ENCODE measurements at regions of chr5 and their contacts with region 1.

Region 1: GRCh38 chr5:173887610-173888472 is at the start of gene CPEB4:
- DNase-seq: peak; percentile 99 to 100
- ATAC-seq: peak; percentile 92 to 94
- H3K4me3 ChIP-seq: peak within 1 kb of the TSS; percentile 79 to 90 (median 88)
- H3K27ac ChIP-seq: peak within 1 kb of the TSS; percentile 94 to 99 (median 96)
- H3K4me1 ChIP-seq: peaks cover 0 to 14% of the 10 kb centered on the region in 2 donors
- H3K27me3 ChIP-seq: no peaks in the 10 kb centered on the region
- CTCF ChIP-seq: no peak
- POLR2A ChIP-seq: peak; percentile 99 to 100
- total RNA-seq, gene CPEB4: 97.8 to 109 (median 102) TPM

Region 2: DNA sequence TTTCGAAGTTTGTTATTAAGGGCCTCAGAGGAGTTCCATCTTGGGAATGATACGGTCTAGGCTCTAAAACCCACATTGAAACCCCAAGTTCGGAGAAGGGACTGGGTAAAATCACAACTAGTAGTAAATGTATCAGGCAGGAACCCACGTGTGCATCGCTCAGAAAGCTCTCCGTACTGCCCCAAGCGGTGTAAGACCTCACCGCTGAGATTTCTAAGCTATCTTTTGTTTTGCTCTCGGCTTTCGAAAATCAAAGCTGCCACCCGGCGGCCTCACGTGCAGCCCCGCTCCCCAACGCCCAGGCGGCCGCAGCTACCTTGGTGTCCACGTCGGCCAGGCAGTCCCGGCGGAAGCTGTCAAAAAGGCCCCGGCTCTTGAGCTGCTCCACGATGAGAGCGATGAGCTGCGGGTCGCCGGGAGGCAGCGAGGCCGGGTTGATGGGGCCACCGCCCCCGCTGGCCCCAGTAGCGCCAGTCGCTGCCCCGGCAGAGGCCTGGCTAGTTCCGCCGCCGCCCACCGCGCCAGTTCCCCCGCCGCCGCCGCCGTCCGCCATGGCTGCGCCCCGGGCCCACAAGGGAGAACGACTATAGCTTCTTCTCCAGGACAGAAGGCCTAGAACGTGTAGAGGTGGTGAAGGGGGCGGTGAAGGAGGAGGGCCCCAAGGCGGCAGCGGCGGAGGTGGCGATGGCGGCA is 271.8 kb before region 1 on chr5:
- in situ Hi-C with region 1: loop called in 3 of 4 experiments (anchors 5 to 10 kb)
- intact Hi-C with region 1: loop called (anchors 1 kb)
- DNase-seq: peak; percentile 35 to 61
- ATAC-seq: peak; percentile 73 to 77
- H3K4me3 ChIP-seq: peak overlapping the region; percentile 75 to 91 (median 88)
- H3K27ac ChIP-seq: peak overlapping the region; percentile 95 to 98 (median 97)
- H3K4me1 ChIP-seq: peaks cover 40 to 49% of the 10 kb centered on the region in 2 donors
- H3K27me3 ChIP-seq: no peaks in the 10 kb centered on the region
- CTCF ChIP-seq: peak; percentile 46 to 81 (median 67)
- POLR2A ChIP-seq: no peak

Region 3: DNA sequence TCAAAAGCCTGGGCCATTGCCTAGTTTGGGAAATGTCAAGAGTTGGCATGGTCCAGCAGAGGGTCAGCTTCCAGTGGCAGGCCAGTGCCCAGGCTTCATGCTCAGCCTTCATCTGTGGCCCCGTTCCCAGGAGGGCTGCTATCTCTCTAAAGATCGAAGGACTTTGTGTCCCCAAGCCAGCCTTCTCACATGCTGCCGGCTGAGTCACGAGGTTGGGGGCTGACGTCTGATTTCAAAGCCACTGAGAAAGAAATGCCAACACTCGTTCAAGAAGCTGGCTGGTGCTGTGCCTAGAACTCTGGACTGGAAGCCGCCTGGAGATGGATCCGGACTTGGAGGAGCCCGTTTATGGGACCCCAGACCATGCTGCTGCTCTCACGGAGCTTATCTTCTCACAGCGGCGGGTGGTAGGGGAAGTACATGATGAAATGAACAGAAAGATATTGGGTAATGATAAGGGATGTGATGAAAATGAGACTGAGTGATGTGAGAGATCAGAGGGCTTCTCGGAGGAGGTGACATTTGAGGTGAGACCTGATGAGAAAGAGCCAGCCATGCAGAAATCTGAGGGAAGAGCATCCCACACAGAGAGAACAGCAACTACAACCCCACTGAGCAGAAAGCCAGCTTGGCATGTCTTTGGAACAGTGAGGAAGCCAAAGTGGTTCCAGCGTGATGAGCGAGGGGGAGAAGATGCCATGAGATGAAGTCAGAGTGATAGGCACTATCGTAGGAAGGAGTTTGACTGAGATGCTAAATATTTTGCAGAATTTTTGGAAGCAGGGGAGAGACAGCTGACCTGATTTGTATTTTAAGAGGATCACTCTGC is 216.5 kb before region 1 on chr5:
- in situ Hi-C with region 1: no loop called
- intact Hi-C with region 1: loop called (anchors 5 kb)
- DNase-seq: peak; percentile 92 to 97
- ATAC-seq: peak; percentile 85 to 88
- H3K4me3 ChIP-seq: peak overlapping the region; percentile 32 to 48 (median 44)
- H3K27ac ChIP-seq: peak overlapping the region; percentile 87 to 91 (median 88)
- H3K4me1 ChIP-seq: peaks cover 35 to 44% of the 10 kb centered on the region in 2 donors
- H3K27me3 ChIP-seq: no peaks in the 10 kb centered on the region
- CTCF ChIP-seq: no peak
- POLR2A ChIP-seq: peak; percentile 66 to 67

Region 4: DNA sequence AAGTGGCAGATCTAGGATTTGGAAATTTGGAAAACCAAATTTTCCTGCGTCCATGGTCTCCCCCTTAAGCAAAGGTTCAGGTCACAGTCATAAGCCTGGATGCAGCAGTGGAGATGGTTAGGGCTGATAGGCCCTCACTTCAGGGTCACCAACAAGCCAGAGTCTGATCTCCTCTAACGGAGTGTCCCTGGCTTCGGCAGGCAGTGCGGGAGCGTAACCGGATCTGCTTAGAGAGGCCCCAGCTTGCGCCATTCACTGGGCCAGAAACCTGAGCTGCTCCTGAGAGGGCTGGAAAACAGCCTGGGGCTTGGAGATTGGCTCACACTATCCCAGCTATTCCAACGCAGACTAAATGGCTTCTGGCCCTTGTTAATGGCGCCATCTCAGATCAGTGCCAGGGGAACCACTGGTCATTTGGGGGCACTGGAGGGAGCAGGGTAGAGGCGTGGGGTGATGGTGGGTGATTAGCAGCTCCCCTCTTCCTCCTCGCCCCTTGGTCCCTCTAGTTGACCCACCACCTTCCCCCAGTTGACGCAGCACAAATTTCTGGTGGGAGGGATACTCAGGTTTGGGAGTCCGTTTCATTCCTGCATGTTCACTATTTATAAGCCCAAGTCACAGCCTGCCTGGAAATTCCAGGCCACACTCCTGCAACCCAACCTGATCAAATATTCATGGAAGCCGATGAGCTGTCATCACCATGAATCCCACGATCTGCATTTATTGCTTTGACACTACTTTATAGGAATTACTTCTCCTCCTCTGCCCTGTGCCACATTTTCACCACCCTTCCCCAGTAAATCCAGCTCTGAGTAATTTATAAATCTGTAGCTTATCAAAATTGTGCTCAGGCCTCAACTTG is 134.3 kb before region 1 on chr5:
- in situ Hi-C with region 1: loop called in 1 of 4 experiments (anchors 5 kb)
- intact Hi-C with region 1: no loop called
- DNase-seq: peak; percentile 91 to 97
- ATAC-seq: peak; percentile 88 to 91
- H3K4me3 ChIP-seq: peak overlapping the region in 2 of 4 donors; percentile 29 to 35
- H3K27ac ChIP-seq: peak overlapping the region; percentile 88 to 97 (median 92)
- H3K4me1 ChIP-seq: peaks cover 44 to 47% of the 10 kb centered on the region in 2 donors
- H3K27me3 ChIP-seq: no peaks in the 10 kb centered on the region
- CTCF ChIP-seq: no peak
- POLR2A ChIP-seq: no peak

Region 5: DNA sequence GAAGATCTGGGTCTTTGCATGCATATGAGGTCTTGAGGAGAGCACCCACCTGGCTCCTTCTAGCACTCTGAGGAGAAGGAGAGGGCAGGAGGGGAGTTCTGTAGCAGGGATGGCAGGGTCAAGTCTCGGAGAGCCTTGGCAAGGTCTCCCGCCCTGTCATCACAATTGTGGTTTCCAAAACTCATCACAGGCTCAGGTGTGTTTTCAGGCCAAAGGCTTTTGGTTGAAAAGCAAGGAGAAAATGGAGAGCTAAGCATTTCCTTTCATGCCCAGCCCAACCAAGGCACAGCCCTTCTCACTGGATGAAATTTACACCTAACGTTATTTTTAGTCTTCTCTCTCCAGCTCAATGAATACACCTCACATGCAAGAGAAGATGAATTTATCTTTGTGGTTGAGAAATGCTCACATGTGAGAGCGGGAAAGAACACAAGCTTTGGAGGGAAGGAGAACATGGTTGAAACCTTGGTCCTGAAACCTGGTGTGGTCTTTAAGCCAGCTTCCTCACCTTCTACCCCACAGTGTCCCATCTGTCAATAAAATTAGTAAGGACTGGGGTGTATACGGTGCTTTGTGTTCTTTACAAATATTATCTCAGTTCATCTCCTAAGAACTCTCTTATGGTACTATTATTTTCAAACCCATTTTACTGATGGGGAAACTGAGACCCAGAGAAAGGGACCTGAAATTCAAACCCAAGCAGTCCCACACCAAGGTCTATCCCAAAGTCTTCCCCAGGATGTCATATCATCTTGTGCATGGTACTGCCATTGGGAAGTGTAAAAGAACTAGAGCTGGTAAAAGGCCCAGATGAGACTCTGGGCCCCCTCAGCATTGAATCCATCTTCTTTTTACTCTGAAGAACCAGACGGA is 47.5 kb before region 1 on chr5:
- in situ Hi-C with region 1: no loop called
- intact Hi-C with region 1: loop called (anchors 2 kb)
- DNase-seq: no peak
- ATAC-seq: peak; percentile 67 to 75
- H3K4me3 ChIP-seq: no peak overlapping the region
- H3K27ac ChIP-seq: peak overlapping the region; percentile 42 to 79 (median 60)
- H3K4me1 ChIP-seq: peaks cover 17 to 22% of the 10 kb centered on the region in 2 donors
- H3K27me3 ChIP-seq: no peaks in the 10 kb centered on the region
- CTCF ChIP-seq: no peak
- POLR2A ChIP-seq: no peak

Region 6: GRCh38 chr5:173963867-173964441 is 76.1 kb after region 1 on chr5:
- in situ Hi-C with region 1: loop called in 2 of 4 experiments (anchors 5 to 10 kb)
- intact Hi-C with region 1: no loop called
- DNase-seq: no peak
- ATAC-seq: peak in 1 of 2 donors; percentile 13
- H3K4me3 ChIP-seq: peak overlapping the region in 3 of 4 donors; percentile 2 to 30 (median 4)
- H3K27ac ChIP-seq: peak overlapping the region; percentile 76 to 88 (median 84)
- H3K4me1 ChIP-seq: peaks cover 16 to 25% of the 10 kb centered on the region in 2 donors
- H3K27me3 ChIP-seq: no peaks in the 10 kb centered on the region
- CTCF ChIP-seq: no peak
- POLR2A ChIP-seq: peak in 1 of 2 donors; percentile 46

Region 7: GRCh38 chr5:174311531-174312269 is 423.9 kb after region 1 on chr5:
- in situ Hi-C with region 1: no loop called
- intact Hi-C with region 1: loop called (anchors 10 kb)
- DNase-seq: peak in 1 of 2 donors; percentile 41
- ATAC-seq: peak; percentile 69 to 73
- H3K4me3 ChIP-seq: peak overlapping the region; percentile 33 to 59 (median 37)
- H3K27ac ChIP-seq: peak overlapping the region in 2 of 4 donors; percentile 8 to 74
- H3K4me1 ChIP-seq: peaks cover 15 to 19% of the 10 kb centered on the region in 2 donors
- H3K27me3 ChIP-seq: no peaks in the 10 kb centered on the region
- CTCF ChIP-seq: peak; percentile 63 to 89 (median 82)
- POLR2A ChIP-seq: no peak

Measured in gastrocnemius medialis (tissue), 4 donors.